ENCODE measurements at regions of chr17 and their contacts with region 1.

Region 1: GRCh38 chr17:78112518-78113226 is 15.9 kb downstream of the TMC6 start:
- DNase-seq: peak; percentile 81
- ATAC-seq: peak; percentile 73 to 78

Region 2: DNA sequence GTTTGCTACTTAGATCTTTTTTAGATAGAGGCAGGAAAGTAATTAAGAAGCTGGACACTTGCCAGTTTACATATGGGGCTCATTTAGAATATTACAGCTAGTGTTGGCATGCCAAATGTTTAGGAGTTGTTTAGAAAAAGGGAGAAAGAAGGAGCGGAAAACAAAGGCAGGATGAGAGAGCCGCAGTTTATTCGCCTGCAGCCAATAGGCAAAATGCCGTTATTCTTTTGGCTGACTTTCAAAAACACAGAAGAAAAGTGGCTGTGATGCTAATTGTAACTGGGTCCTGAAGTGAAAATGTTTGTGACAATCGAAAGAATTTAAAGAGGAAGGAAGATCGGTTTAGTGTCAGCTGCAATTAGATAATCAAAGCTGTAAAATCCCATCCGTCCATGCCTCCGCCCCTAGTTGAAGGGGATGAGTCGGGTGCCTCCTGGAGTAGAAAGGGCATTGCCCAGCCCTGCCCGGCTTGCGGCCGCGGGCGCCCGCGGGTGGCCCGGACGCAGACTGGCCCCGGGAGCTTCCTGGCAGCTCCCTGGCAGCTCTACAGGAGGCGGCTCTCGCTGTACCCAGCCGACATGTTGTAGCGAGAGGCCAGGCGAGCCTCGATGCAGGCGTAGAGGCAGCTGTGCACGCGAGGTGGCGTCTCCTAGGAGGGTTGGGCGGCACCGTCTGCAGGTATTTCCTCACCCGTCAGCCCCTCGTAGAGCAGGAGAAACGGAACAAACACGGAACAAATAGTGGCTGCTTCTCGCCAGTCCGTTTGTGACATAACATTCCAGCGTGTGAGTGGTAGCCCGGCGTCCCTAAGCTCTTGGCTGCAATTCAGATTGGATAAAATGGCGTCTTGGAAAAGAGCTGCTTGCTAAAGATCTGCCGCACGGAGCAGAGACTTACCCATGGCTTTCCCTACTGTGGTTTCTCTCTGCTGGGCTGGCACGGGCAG is 72.0 kb before region 1 on chr17:
- intact Hi-C with region 1: no loop called
- DNase-seq: peak; percentile 64
- ATAC-seq: peak; percentile 85 to 89

Region 3: DNA sequence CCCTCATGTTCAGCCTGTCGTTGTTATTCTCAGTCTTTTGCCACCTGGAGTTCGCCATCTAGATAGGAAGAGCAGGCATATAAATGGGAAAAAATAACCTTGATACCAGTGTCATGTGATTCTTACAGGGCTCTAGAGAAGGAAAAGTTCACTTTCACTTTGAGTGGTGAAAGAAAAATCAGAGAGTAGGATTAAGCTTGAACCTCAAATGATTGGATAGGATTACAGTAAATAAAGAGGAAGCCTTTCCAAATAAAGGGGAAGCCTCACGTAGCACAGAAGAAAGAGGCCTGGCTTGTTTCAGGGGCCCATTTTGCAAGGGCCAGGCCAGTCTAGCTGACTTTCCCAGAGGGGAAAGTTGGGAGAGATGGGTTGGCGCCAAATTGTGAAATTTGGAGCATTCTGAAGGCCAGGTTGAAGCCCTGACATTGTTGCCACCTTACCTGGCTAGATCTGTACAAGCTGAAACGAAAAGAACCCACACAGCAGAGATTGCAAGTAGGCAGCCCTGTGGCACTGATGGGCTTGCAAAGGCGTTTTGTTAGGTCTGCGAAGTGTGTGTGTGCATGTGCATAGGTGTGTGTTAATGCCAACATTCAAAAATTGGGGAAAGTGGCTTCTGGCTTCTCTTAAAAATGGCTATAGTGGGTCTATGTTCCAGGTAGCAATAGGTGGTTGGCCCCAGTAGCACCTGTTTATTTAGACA is 22.9 kb before region 1 on chr17:
- intact Hi-C with region 1: no loop called
- DNase-seq: no peak
- ATAC-seq: peak in 1 of 2 donors; percentile 42

Region 4: GRCh38 chr17:78159575-78160158 is 47.0 kb after region 1 on chr17:
- intact Hi-C with region 1: no loop called
- DNase-seq: no peak
- ATAC-seq: no peak

Region 5: DNA sequence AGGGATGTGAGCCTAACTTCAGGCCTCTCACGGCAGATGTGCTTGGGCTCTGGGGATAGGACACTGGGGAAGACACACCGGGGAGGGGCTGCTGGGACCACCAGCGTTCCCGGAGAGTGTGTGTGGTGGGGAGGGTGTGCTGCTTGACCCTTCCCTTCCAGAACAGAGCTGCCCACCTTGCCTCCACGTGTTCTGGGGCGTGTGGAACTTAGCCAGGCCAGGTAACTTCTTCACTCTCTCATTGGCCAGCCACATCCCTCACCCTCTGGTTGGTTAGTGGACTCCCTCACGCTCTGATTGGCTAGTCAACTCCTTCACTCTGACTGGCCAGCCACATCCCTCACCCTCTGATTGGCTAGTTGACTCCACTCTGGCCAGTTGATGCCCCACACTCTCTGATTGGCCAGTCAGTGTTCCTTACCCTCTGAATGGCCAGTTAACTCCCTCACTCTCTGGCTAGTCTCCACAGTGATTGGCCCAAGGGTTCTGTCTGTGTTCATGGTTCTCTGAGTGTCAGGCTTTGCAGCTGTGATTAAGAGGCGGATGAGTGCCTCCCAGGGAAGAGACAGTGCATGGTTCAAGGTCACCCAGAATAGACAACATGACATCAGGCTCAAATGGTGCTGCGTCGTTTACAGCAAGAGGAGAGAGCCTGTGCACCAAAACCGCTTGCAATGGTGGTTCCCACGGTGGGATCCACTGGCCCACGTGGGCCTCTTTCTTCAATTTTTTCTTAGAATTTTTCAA is 128.8 kb after region 1 on chr17:
- intact Hi-C with region 1: loop called in 1 of 2 experiments (anchors 10 kb)
- DNase-seq: no peak
- ATAC-seq: peak; percentile 46 to 65

Region 6: DNA sequence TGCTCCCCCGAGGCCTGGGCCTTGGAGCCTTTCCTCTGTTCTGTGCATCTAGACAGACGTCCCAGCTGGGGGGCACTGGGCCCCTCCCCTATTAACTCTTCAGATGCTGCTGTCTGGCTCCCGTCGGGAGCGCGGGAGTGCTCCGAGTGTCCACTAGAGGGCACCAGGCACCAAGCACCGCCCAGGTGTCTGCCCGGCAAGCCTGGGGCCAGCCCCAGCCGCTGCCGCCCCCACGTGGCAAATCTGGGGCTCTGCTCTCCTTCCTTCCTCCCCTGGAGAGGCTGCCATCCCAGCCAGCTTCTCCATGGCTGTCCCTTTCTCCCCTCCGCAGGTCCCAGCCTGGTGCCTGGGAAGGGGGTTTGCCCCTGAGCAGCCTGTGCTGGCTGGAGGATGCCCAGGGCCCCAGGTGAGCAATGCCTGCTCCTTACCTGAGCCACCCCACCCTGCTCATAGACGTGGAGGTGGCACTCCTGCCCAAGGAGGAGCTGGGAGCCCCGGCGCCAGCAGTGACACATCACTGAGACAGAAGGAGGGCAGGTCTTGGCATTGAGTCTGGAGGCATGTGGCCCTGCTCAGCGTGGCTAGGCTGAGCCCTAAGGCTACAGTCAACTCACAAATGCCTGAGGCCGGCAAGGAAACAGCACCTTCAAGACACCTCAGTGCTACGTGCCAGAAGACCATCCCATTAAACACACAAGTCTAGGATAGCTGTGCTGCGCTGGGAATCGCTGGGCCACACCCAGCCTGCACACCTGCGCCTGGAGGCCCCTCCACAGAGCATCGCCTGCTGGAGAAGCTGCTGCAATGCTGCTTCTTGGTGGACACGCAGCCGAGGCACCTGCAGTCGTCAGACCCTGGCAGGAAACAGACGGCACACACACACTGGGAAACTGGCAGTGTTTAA is 138.5 kb after region 1 on chr17:
- intact Hi-C with region 1: loop called (anchors 5 to 10 kb)
- DNase-seq: peak; percentile 87
- ATAC-seq: peak; percentile 75 to 78

Region 7: GRCh38 chr17:78263063-78263743 is 150.5 kb after region 1 on chr17:
- intact Hi-C with region 1: no loop called
- DNase-seq: peak; percentile 78
- ATAC-seq: peak; percentile 33 to 39

Measured in left cardiac atrium (tissue), 4 donors.